ENCODE measurements at regions of chr12 and their contacts with region 1.

Region 1: DNA sequence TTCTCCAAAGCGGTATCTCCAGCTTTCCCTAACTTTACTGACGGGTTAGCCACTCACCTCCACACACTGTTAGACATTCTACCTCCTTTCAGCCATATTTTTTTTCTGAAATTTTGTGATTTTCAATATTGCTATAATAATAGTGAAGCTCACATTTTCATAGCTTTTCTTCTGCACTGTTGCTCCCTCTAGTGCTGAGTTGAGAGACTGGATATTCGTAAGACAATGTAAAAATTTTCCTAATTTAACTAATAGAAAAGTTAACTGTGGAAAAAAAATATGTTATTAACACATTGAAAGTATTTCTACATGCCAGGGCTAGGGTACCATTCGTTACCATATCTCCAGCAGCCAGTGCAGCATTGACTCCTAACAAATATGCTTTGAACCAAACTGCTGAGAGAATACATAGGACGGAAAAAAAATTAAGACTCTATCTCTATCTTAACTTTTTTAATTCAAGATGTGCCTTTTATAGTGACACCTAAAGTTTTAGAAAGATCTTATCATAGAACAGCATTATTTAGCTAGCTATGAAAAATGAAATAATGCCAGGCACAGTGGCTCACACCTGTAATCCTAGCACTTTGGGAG is 48.7 kb upstream of the ABCC9 start:
- DNase-seq: peak in 1 of 2 donors; percentile 21
- H3K4me3 ChIP-seq: no peak overlapping the region
- H3K27ac ChIP-seq: no peak overlapping the region
- H3K4me1 ChIP-seq: no peaks in the 10 kb centered on the region
- H3K27me3 ChIP-seq: no peaks in the 10 kb centered on the region
- CTCF ChIP-seq: peak; percentile 50 to 73 (median 64)
- POLR2A ChIP-seq: no peak

Region 2: GRCh38 chr12:21697904-21698630 is 291.8 kb before region 1 on chr12:
- intact Hi-C with region 1: loop called (anchors 10 kb)
- DNase-seq: no peak
- H3K4me3 ChIP-seq: peak overlapping the region in 1 of 2 donors; percentile 10
- H3K27ac ChIP-seq: peak overlapping the region in 1 of 2 donors; percentile 17
- H3K4me1 ChIP-seq: no peaks in the 10 kb centered on the region
- H3K27me3 ChIP-seq: no peaks in the 10 kb centered on the region
- CTCF ChIP-seq: peak; percentile 54 to 73 (median 64)
- POLR2A ChIP-seq: no peak